Mammary epithelial cell (primary cell): ENCODE measurements at regions of chr10 and their contacts with region 1.

Region 1: DNA sequence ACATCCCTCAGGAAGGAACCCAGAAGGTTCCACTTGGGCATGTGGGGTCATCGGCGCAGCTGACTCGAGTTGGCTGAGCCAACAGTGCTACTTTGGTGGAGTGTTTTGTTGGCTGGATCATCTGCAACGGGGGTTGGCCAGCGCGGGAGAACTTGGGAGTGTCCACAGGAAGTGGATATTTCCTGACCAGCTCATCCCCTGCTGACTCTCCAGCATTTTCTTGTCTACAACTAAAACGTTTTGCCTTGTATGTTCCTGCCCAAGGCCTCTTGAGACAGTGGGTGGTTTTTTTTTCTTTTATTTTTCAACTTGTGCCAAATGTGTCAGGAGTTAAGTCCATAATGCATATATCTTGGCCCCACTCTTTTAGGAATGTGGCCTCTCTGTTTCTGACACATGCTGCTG is 208.6 kb downstream of the ZNF365 start:
- DNase-seq: peak; percentile 81
- H3K4me3 ChIP-seq: no peak overlapping the region
- H3K27ac ChIP-seq: peak overlapping the region; percentile 36
- H3K4me1 ChIP-seq: peaks cover 28% of the 10 kb centered on the region
- H3K27me3 ChIP-seq: no peaks in the 10 kb centered on the region
- CTCF ChIP-seq: no peak

Region 2: GRCh38 chr10:62560199-62560819 is 22.5 kb before region 1 on chr10:
- CTCF ChIA-PET with region 1: interaction called, 13 read pairs
- dilution Hi-C with region 1: no loop called
- in situ Hi-C with region 1: no loop called
- intact Hi-C with region 1: loop called (anchors 2 kb)
- DNase-seq: peak; percentile 54
- H3K4me3 ChIP-seq: no peak overlapping the region
- H3K27ac ChIP-seq: no peak overlapping the region
- H3K4me1 ChIP-seq: peaks cover 15% of the 10 kb centered on the region
- H3K27me3 ChIP-seq: no peaks in the 10 kb centered on the region
- CTCF ChIP-seq: no peak

Region 3: DNA sequence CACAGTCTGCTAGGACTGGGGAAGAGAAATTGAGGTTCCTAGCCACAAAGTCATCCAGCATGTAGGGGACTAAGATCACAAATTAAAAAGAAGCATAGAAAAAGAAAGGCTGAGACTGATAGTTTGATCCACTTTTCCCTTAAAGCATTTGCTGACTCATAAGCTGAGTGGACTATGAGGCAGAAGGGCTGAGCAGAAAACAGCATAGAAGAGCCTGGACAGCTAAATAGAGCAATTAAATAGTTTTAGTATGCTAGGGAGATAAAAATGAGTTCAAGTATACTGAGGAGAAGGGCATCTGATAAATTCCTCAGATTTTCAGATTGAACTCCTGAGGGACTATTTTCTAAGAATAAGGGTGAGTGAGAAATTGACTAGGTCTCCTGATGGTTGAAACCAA is 389.3 kb after region 1 on chr10:
- CTCF ChIA-PET with region 1: no interaction called
- dilution Hi-C with region 1: no loop called
- in situ Hi-C with region 1: no loop called
- intact Hi-C with region 1: no loop called
- DNase-seq: peak; percentile 34
- H3K4me3 ChIP-seq: no peak overlapping the region
- H3K27ac ChIP-seq: no peak overlapping the region
- H3K4me1 ChIP-seq: peaks cover 4% of the 10 kb centered on the region
- H3K27me3 ChIP-seq: no peaks in the 10 kb centered on the region
- CTCF ChIP-seq: no peak